ENCODE measurements at regions of chr19 and their contacts with region 1.

Region 1: GRCh38 chr19:4352701-4353121 is 9.3 kb downstream of the MPND start:
- DNase-seq: peak; percentile 61
- H3K4me3 Mint-ChIP-seq: no peak overlapping the region
- H3K27ac Mint-ChIP-seq: no peak overlapping the region
- H3K4me1 Mint-ChIP-seq: no peaks in the 10 kb centered on the region
- H3K27me3 Mint-ChIP-seq: no peaks in the 10 kb centered on the region

Region 2: DNA sequence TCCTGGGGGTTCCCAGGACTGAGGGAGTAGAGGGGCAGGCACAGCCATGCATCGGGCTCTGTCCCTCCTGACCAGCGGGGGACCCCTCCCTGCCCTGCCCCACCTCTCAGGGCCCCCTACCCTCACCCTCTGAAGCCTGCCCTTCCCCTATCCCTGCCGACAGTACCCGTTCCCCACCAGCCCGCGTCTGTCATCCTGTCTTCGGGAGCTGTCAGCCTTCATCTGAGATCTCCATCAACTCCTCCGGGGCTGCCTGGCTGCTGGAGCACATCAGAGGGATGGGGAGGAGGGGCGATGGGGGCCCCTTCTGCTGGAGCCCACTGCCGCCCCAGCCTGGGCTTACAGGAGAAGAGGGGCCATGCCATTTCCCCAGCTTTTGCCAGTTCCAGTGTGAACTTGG is 79.8 kb before region 1 on chr19:
- CTCF ChIA-PET with region 1: interaction called, 93 read pairs
- POLR2A ChIA-PET with region 1: no interaction called
- intact Hi-C with region 1: no loop called
- DNase-seq: no peak
- H3K4me3 Mint-ChIP-seq: no peak overlapping the region
- H3K27ac Mint-ChIP-seq: no peak overlapping the region
- H3K4me1 Mint-ChIP-seq: no peaks in the 10 kb centered on the region
- H3K27me3 Mint-ChIP-seq: no peaks in the 10 kb centered on the region

Region 3: GRCh38 chr19:4362861-4363510 is 10.3 kb after region 1 on chr19:
- CTCF ChIA-PET with region 1: interaction called, 10 read pairs
- POLR2A ChIA-PET with region 1: no interaction called
- intact Hi-C with region 1: no loop called
- DNase-seq: peak; percentile 28
- H3K4me3 Mint-ChIP-seq: no peak overlapping the region
- H3K27ac Mint-ChIP-seq: no peak overlapping the region
- H3K4me1 Mint-ChIP-seq: peaks cover 2% of the 10 kb centered on the region
- H3K27me3 Mint-ChIP-seq: no peaks in the 10 kb centered on the region